Vagina (tissue), 2 donors: ENCODE measurements at regions of chr3 and their contacts with region 1.

Region 1: GRCh38 chr3:50611464-50612233 is at the start of gene CISH:
- DNase-seq: peak in 1 of 2 donors; percentile 98
- H3K4me3 ChIP-seq: peak within 1 kb of the TSS; percentile 79 to 89
- H3K27ac ChIP-seq: peak within 1 kb of the TSS; percentile 91
- H3K4me1 ChIP-seq: peaks cover 68% of the 10 kb centered on the region
- H3K27me3 ChIP-seq: no peaks in the 10 kb centered on the region
- CTCF ChIP-seq: peak in 2 of 3 experiments; percentile 5 to 25
- POLR2A ChIP-seq: peak in 1 of 2 donors; percentile 90
- total RNA-seq, gene CISH: 21.9 TPM

Region 2: GRCh38 chr3:50571486-50571885 is 40.2 kb before region 1 on chr3:
- intact Hi-C with region 1: loop called (anchors 1 kb)
- DNase-seq: no peak
- H3K4me3 ChIP-seq: no peak overlapping the region
- H3K27ac ChIP-seq: no peak overlapping the region
- H3K4me1 ChIP-seq: peaks cover 55% of the 10 kb centered on the region
- H3K27me3 ChIP-seq: no peaks in the 10 kb centered on the region
- CTCF ChIP-seq: no peak
- POLR2A ChIP-seq: no peak

Region 3: GRCh38 chr3:51190199-51190839 is 578.7 kb after region 1 on chr3:
- intact Hi-C with region 1: no loop called
- DNase-seq: no peak
- H3K4me3 ChIP-seq: no peak overlapping the region
- H3K27ac ChIP-seq: no peak overlapping the region
- H3K4me1 ChIP-seq: no peaks in the 10 kb centered on the region
- H3K27me3 ChIP-seq: no peaks in the 10 kb centered on the region
- CTCF ChIP-seq: no peak
- POLR2A ChIP-seq: no peak

Region 4: DNA sequence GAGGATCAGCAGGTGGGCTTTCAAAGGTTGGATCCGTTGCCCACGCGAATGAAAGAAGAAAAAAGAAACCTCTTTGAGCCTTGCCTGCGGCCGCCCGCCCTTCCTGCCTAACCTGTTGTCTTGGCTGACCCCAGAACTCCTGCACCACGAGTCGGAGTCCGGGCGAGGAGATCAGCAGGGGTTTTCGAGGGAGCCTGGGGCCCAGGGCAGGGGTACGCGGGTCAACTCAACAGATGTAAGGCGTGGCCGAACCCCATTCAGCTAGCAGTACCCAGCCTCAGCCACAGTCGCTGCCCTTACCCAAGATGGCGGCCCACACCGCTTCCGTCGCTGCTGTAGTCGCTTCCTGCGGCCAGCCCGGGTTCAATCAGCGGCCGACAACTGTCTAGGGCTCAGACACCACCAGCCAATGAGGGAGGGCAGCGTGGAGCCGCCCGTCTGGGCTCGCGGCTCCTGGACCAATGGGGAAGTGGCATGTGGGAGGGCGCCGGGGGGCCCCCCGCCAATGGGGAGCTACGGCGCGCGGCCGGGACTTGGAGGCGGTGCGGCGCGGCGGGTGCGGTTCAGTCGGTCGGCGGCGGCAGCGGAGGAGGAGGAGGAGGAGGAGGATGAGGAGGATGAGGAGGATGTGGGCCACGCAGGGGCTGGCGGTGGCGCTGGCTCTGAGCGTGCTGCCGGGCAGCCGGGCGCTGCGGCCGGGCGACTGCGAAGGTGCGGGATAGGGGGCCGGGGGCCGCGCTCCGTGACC is 773.3 kb after region 1 on chr3 and contains the start of gene MANF:
- intact Hi-C with region 1: loop called (anchors 5 kb)
- DNase-seq: peak in 1 of 2 donors; percentile 99
- H3K4me3 ChIP-seq: peak within 1 kb of the TSS; percentile 64 to 84
- H3K27ac ChIP-seq: peak within 1 kb of the TSS; percentile 87
- H3K4me1 ChIP-seq: peaks cover 55% of the 10 kb centered on the region
- H3K27me3 ChIP-seq: no peaks in the 10 kb centered on the region
- CTCF ChIP-seq: no peak
- POLR2A ChIP-seq: peak in 1 of 2 donors; percentile 77
- total RNA-seq, gene MANF: 42.2 TPM

Region 5: GRCh38 chr3:51434746-51435327 is 823.2 kb after region 1 on chr3:
- intact Hi-C with region 1: loop called (anchors 5 kb)
- DNase-seq: no peak
- H3K4me3 ChIP-seq: no peak overlapping the region
- H3K27ac ChIP-seq: no peak overlapping the region
- H3K4me1 ChIP-seq: no peaks in the 10 kb centered on the region
- H3K27me3 ChIP-seq: no peaks in the 10 kb centered on the region
- CTCF ChIP-seq: peak in 2 of 3 experiments; percentile 22 to 23
- POLR2A ChIP-seq: no peak

Region 6: GRCh38 chr3:52070724-52071621 is 1459.3 kb after region 1 on chr3:
- intact Hi-C with region 1: no loop called
- DNase-seq: no peak
- H3K4me3 ChIP-seq: no peak overlapping the region
- H3K27ac ChIP-seq: peak overlapping the region; percentile 57
- H3K4me1 ChIP-seq: peaks cover 59% of the 10 kb centered on the region
- H3K27me3 ChIP-seq: no peaks in the 10 kb centered on the region
- CTCF ChIP-seq: no peak
- POLR2A ChIP-seq: no peak